Activated B cell treated with CpG ODN at 0.5 μM for 24 hours (primary cell): ENCODE measurements at regions of chr4 and their contacts with region 1.

Region 1: GRCh38 chr4:140884431-140885058 is 128.4 kb upstream of the TBC1D9 start:
- DNase-seq: no peak
- ATAC-seq: peak; percentile 79
- H3K4me3 Mint-ChIP-seq: no peak overlapping the region
- H3K27ac Mint-ChIP-seq: no peak overlapping the region
- H3K4me1 Mint-ChIP-seq: no peaks in the 10 kb centered on the region
- H3K27me3 Mint-ChIP-seq: peaks cover 16% of the 10 kb centered on the region
- CTCF ChIP-seq: no peak

Region 2: DNA sequence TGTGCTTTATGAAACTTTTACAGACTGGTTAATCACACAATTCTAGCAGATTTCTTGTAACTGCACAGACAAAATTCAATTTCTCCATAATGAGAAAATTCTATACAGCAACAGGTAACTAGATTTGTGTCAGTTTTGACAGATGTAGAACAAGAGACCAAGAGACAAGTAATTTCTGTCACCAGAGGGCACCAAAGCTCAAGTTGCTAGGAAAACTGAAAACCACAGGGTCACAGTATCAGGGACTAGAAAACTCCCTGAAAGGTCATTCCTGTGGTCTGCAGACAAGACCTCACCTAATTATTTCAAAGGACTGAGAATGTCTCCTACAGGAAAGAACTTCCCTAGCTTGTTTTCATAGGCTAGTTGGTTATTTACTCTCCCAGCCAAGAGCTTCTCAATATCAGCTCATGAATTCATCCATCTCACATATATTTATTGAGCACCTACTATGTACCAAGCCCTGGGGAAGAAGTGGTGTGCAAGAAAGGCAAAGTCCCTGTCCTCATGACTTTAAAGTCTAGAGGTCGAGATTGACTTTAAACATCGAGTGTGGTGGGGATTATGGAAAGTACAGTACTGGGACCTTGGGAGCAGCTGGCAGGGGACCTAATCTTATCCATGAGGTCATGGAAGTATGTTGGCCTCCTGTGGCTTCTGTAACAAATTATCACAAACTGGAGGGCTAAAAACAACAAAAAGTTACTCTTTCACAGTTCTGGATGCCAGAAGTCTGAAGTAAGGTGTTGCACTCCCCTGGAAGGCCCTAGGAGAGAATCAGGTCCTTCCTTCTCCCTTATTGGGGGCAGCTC is 1280.8 kb before region 1 on chr4:
- CTCF ChIA-PET with region 1: no interaction called
- POLR2A ChIA-PET with region 1: no interaction called
- intact Hi-C with region 1: loop called (anchors 10 kb)
- DNase-seq: no peak
- ATAC-seq: peak; percentile 45
- H3K4me3 Mint-ChIP-seq: no peak overlapping the region
- H3K27ac Mint-ChIP-seq: no peak overlapping the region
- H3K4me1 Mint-ChIP-seq: peaks cover 9% of the 10 kb centered on the region
- H3K27me3 Mint-ChIP-seq: peaks cover 5% of the 10 kb centered on the region
- CTCF ChIP-seq: no peak

Region 3: GRCh38 chr4:140326395-140326993 is 558.1 kb before region 1 on chr4:
- CTCF ChIA-PET with region 1: interaction called, 3 read pairs
- POLR2A ChIA-PET with region 1: no interaction called
- intact Hi-C with region 1: loop called (anchors 1 kb)
- DNase-seq: no peak
- ATAC-seq: no peak
- H3K4me3 Mint-ChIP-seq: no peak overlapping the region
- H3K27ac Mint-ChIP-seq: no peak overlapping the region
- H3K4me1 Mint-ChIP-seq: peaks cover 10% of the 10 kb centered on the region
- H3K27me3 Mint-ChIP-seq: peaks cover 14% of the 10 kb centered on the region
- CTCF ChIP-seq: no peak

Region 4: DNA sequence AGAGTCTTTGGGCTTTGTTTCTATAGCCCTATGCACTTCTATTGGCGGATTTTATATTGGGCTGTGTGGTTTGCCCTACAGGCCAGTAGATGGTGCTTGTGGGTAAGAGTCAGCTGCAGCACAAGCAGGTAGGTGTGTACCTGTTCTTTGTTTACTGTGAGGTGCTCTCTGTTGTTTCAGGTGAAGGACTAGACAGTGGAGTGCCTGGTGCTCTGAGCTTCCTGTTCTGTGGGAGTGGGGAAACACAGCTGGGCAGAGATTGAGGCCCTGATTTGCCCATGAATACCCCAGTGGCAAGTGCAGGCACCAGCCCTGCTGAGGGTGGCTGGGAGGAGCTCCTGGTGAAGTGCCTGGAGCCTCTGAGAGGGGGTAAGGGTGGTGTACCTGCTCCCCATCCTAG is 289.5 kb before region 1 on chr4:
- CTCF ChIA-PET with region 1: interaction called, 10 read pairs
- POLR2A ChIA-PET with region 1: no interaction called
- intact Hi-C with region 1: loop called (anchors 1 kb)
- DNase-seq: no peak
- ATAC-seq: peak; percentile 70
- H3K4me3 Mint-ChIP-seq: no peak overlapping the region
- H3K27ac Mint-ChIP-seq: no peak overlapping the region
- H3K4me1 Mint-ChIP-seq: no peaks in the 10 kb centered on the region
- H3K27me3 Mint-ChIP-seq: peaks cover 29% of the 10 kb centered on the region
- CTCF ChIP-seq: no peak

Region 5: DNA sequence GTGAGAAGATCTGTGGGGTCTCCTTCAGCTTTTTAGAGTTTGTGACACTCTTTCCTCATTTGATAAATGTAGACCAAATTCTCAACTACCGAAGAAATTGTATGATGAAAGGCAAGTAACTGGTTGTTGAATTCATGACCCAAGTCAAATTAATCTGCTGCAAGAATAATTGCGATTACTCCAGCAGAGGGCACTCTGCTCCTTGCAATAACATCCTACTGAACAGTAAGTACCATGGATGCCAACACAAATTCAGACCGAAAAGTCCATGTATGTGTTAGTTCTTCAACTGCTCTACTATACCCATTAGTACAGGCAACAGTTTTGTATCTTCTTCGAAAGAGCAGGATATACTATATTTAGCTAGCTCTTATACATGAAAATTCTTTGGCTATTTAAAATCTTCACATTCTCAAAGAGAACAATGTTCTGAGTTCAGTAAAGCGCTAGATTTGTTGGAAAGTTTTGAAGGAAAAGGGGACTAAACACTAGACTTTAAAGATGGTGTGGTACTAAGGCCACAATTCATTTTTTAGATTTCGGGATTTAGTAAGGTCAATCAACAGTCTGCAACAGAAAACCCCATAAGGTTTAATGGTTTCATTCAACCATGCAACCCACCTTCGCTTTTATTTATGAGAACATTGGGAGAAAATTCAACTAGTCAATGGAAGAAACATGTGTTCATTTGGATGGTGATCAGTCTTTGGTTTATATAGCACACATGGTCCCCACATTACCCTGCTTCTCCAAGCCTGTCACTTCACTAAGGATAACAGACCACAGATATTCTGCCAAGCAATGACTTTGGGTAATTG is 23.0 kb before region 1 on chr4:
- CTCF ChIA-PET with region 1: interaction called, 31 read pairs
- POLR2A ChIA-PET with region 1: no interaction called
- intact Hi-C with region 1: loop called (anchors 1 kb)
- DNase-seq: no peak
- ATAC-seq: peak; percentile 67
- H3K4me3 Mint-ChIP-seq: no peak overlapping the region
- H3K27ac Mint-ChIP-seq: no peak overlapping the region
- H3K4me1 Mint-ChIP-seq: peaks cover 14% of the 10 kb centered on the region
- H3K27me3 Mint-ChIP-seq: peaks cover 2% of the 10 kb centered on the region
- CTCF ChIP-seq: no peak

Region 6: GRCh38 chr4:141002323-141002805 is 117.8 kb after region 1 on chr4:
- CTCF ChIA-PET with region 1: no interaction called
- POLR2A ChIA-PET with region 1: no interaction called
- intact Hi-C with region 1: no loop called
- DNase-seq: no peak
- ATAC-seq: no peak
- H3K4me3 Mint-ChIP-seq: no peak overlapping the region
- H3K27ac Mint-ChIP-seq: no peak overlapping the region
- H3K4me1 Mint-ChIP-seq: no peaks in the 10 kb centered on the region
- H3K27me3 Mint-ChIP-seq: peaks cover 2% of the 10 kb centered on the region
- CTCF ChIP-seq: no peak